Kidney (tissue), 22 donors: ENCODE measurements at regions of chr10 and their contacts with region 1.

Region 1: DNA sequence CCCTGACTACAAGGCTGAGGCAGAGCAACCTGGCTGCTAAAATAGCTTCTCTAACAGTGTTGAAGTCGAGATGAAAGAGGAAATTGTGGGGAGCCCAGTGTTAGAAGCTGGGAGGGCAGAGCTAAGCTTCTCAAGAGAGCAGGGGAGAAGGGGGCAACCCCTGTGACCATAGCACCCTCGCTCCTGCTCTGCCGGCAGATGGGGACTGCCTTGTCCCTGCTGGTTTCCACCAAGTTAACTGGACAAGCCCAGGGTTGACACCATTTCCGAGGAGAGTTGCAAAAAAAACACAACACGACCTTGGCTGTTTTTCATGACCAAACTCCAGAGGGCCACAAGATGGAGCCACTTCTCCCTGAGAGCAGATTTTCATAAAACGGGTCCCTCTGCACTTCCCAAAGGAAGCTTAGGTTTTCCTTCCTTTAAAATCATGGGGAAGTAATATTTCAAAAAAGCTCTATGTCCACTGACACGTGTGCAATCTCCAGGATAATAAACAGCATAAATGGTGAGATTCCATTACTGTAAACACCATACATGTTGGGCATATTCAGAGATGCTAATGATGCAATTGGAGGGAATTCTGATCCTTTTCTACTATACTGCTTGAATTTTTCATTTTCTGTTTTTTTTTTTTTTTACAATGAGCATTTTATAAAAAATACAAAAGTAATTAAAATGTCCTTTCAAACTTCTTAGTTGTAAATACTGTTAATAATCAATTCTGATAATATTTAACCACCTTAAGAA is 140.4 kb downstream of the PIP4K2A start:
- DNase-seq: peak in 1 of 5 donors; percentile 34
- H3K4me3 ChIP-seq: no peak overlapping the region
- H3K27ac ChIP-seq: no peak overlapping the region
- H3K4me1 ChIP-seq: peaks cover 0 to 2% (median 0%) of the 10 kb centered on the region in 3 donors
- H3K27me3 ChIP-seq: no peaks in the 10 kb centered on the region
- CTCF ChIP-seq: peak; percentile 15

Region 2: GRCh38 chr10:22067099-22067498 is 506.9 kb before region 1 on chr10:
- intact Hi-C with region 1: no loop called
- DNase-seq: no peak
- H3K4me3 ChIP-seq: no peak overlapping the region
- H3K27ac ChIP-seq: no peak overlapping the region
- H3K4me1 ChIP-seq: no peaks in the 10 kb centered on the region
- H3K27me3 ChIP-seq: no peaks in the 10 kb centered on the region
- CTCF ChIP-seq: no peak

Region 3: GRCh38 chr10:22630234-22631174 is 56.5 kb after region 1 on chr10:
- intact Hi-C with region 1: no loop called
- DNase-seq: no peak
- H3K4me3 ChIP-seq: no peak overlapping the region
- H3K27ac ChIP-seq: peak overlapping the region in 1 of 2 donors; percentile 39
- H3K4me1 ChIP-seq: peaks cover 3 to 29% (median 20%) of the 10 kb centered on the region in 3 donors
- H3K27me3 ChIP-seq: no peaks in the 10 kb centered on the region
- CTCF ChIP-seq: no peak

Region 4: GRCh38 chr10:22988581-22989360 is 414.8 kb after region 1 on chr10:
- intact Hi-C with region 1: loop called (anchors 10 kb)
- DNase-seq: peak in 4 of 5 donors; percentile 61 to 89 (median 74)
- H3K4me3 ChIP-seq: peak overlapping the region in 2 of 3 donors; percentile 8 to 40
- H3K27ac ChIP-seq: no peak overlapping the region
- H3K4me1 ChIP-seq: peaks cover 0 to 2% (median 0%) of the 10 kb centered on the region in 3 donors
- H3K27me3 ChIP-seq: no peaks in the 10 kb centered on the region
- CTCF ChIP-seq: peak; percentile 92